ENCODE measurements at regions of chr9 and their contacts with region 1.

Region 1: GRCh38 chr9:105950894-105951293 is 256.6 kb downstream of the TMEM38B start:
- DNase-seq: no peak
- H3K4me3 ChIP-seq: no peak overlapping the region
- H3K27ac ChIP-seq: no peak overlapping the region
- H3K4me1 ChIP-seq: no peaks in the 10 kb centered on the region
- H3K27me3 ChIP-seq: no peaks in the 10 kb centered on the region
- CTCF ChIP-seq: no peak

Region 2: GRCh38 chr9:105994970-105995369 is 44.1 kb after region 1 on chr9:
- CTCF ChIA-PET with region 1: no interaction called
- POLR2A ChIA-PET with region 1: no interaction called
- intact Hi-C with region 1: loop called (anchors 10 kb)
- DNase-seq: no peak
- H3K4me3 ChIP-seq: no peak overlapping the region
- H3K27ac ChIP-seq: no peak overlapping the region
- H3K4me1 ChIP-seq: no peaks in the 10 kb centered on the region
- H3K27me3 ChIP-seq: peaks cover 4% of the 10 kb centered on the region
- CTCF ChIP-seq: no peak

Region 3: DNA sequence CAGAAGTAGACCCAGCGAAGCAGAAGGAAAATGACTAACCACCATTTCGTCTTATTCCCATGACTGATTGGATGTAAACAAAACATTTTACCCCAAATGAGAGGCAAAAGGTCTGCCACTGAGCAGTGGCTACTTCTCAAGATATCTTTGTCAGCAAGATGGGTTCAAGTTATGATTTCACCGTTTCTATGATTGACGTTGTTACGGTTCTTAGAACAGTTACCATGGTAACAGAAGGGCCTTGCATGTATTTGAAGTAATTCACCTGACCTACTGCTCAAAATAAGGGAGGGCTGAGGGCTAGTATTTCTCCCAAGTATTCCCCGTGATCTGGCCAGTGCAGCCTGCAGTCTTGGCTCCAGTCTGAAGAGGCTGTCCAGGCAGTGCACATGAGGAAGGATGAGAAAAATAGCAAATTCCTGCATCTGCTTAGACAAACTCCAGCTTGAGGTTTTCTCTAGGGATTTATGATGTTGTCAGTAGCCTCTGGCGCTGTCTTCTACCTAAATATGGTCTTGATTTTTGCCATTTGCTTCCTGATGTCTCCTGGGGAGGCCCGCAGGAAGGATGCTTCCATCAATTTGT is 116.1 kb after region 1 on chr9:
- CTCF ChIA-PET with region 1: no interaction called
- POLR2A ChIA-PET with region 1: no interaction called
- intact Hi-C with region 1: no loop called
- DNase-seq: no peak
- H3K4me3 ChIP-seq: no peak overlapping the region
- H3K27ac ChIP-seq: no peak overlapping the region
- H3K4me1 ChIP-seq: no peaks in the 10 kb centered on the region
- H3K27me3 ChIP-seq: no peaks in the 10 kb centered on the region
- CTCF ChIP-seq: no peak

Region 4: DNA sequence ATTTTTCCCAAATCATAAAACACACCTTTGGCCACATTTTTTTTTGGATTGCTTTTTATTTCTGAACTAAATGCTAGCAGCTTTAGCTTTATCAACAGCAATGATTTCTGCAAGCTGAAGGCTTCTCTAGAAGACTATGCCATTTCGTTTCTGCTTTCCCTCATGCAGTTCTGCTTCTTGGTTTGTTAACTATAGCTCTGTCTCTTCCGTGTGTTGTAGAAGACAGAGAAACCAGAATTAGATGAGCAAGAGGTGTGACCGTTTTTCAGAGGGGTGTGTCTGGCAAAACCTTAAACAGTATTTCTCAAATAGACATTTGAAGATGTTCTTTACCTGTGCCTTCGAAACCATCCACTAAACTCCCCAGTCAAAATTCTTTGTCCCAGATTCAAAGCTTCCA is 1043.6 kb after region 1 on chr9:
- CTCF ChIA-PET with region 1: no interaction called
- POLR2A ChIA-PET with region 1: no interaction called
- intact Hi-C with region 1: no loop called
- DNase-seq: no peak
- H3K4me3 ChIP-seq: no peak overlapping the region
- H3K27ac ChIP-seq: no peak overlapping the region
- H3K4me1 ChIP-seq: no peaks in the 10 kb centered on the region
- H3K27me3 ChIP-seq: no peaks in the 10 kb centered on the region
- CTCF ChIP-seq: no peak

Measured in A673 (cell line).